ENCODE measurements at regions of chr2 and their contacts with region 1.

Region 1: DNA sequence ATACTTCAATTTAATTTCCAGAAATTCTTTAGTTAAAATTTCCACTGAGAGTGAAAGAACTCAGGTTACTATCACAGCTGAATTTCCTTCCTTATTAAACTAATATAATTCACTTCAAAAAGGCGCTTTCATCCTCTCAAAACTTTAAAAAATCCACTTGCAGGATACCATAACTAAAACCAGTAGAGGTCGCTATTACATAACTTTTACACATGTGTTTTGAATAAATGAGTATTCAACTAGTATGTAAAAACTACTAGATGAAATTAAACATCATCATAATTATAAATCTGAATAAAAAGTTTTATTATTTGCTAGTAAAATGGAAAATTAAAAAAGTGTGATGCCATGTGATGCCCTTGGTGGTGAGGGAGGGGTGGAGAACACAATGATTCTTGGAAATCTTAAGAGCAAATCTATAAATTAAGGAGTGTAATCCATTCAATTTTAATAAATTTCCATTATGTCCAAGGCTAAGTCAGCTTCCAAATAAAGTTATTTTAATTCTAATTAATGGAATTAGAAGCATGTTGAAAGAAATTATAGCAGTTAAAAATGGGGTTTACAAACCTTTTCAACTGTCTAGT is 61.4 kb downstream of the SOS1 start:
- DNase-seq: no peak
- H3K4me3 Mint-ChIP-seq: no peak overlapping the region
- H3K27ac Mint-ChIP-seq: no peak overlapping the region
- H3K4me1 Mint-ChIP-seq: no peaks in the 10 kb centered on the region
- H3K27me3 Mint-ChIP-seq: no peaks in the 10 kb centered on the region
- CTCF ChIP-seq: peak; percentile 43

Region 2: GRCh38 chr2:39202639-39203369 is 143.3 kb after region 1 on chr2:
- CTCF ChIA-PET with region 1: no interaction called
- intact Hi-C with region 1: no loop called
- DNase-seq: no peak
- H3K4me3 Mint-ChIP-seq: no peak overlapping the region
- H3K27ac Mint-ChIP-seq: no peak overlapping the region
- H3K4me1 Mint-ChIP-seq: no peaks in the 10 kb centered on the region
- H3K27me3 Mint-ChIP-seq: no peaks in the 10 kb centered on the region
- CTCF ChIP-seq: no peak

Region 3: GRCh38 chr2:39227628-39228412 is 168.4 kb after region 1 on chr2:
- CTCF ChIA-PET with region 1: interaction called, 4 read pairs
- intact Hi-C with region 1: loop called (anchors 1 kb)
- DNase-seq: peak; percentile 76
- H3K4me3 Mint-ChIP-seq: no peak overlapping the region
- H3K27ac Mint-ChIP-seq: no peak overlapping the region
- H3K4me1 Mint-ChIP-seq: no peaks in the 10 kb centered on the region
- H3K27me3 Mint-ChIP-seq: no peaks in the 10 kb centered on the region
- CTCF ChIP-seq: peak; percentile 61

Measured in Calu3 (cell line).